ENCODE measurements at regions of chr19 and their contacts with region 1.

Region 1: GRCh38 chr19:19643158-19644053 is at the start of gene GMIP:
- DNase-seq: peak; percentile 89
- ATAC-seq: peak; percentile 89
- H3K4me3 Mint-ChIP-seq: peak within 1 kb of the TSS; percentile 99
- H3K27ac Mint-ChIP-seq: peak within 1 kb of the TSS; percentile 96
- H3K4me1 Mint-ChIP-seq: peaks cover 19% of the 10 kb centered on the region
- H3K27me3 Mint-ChIP-seq: no peaks in the 10 kb centered on the region
- CTCF ChIP-seq: no peak
- total RNA-seq, gene GMIP: 129 and 130 TPM in 2 replicates

Region 2: GRCh38 chr19:19515764-19516519 is 127.5 kb before region 1 on chr19 and contains the start of gene NDUFA13:
- CTCF ChIA-PET with region 1: no interaction called
- POLR2A ChIA-PET with region 1: no interaction called
- intact Hi-C with region 1: loop called (anchors 1 kb)
- DNase-seq: peak; percentile 97
- ATAC-seq: peak; percentile 90
- H3K4me3 Mint-ChIP-seq: peak within 1 kb of the TSS; percentile 95
- H3K27ac Mint-ChIP-seq: peak within 1 kb of the TSS; percentile 93
- H3K4me1 Mint-ChIP-seq: peaks cover 38% of the 10 kb centered on the region
- H3K27me3 Mint-ChIP-seq: no peaks in the 10 kb centered on the region
- CTCF ChIP-seq: no peak
- total RNA-seq, gene NDUFA13: 294 and 317 TPM in 2 replicates

Region 3: GRCh38 chr19:19591133-19591825 is 52.1 kb before region 1 on chr19:
- CTCF ChIA-PET with region 1: interaction called, 5 read pairs
- POLR2A ChIA-PET with region 1: no interaction called
- intact Hi-C with region 1: loop called (anchors 2 kb)
- DNase-seq: no peak
- ATAC-seq: peak; percentile 91
- H3K4me3 Mint-ChIP-seq: peak overlapping the region; percentile 70
- H3K27ac Mint-ChIP-seq: peak overlapping the region; percentile 92
- H3K4me1 Mint-ChIP-seq: peaks cover 41% of the 10 kb centered on the region
- H3K27me3 Mint-ChIP-seq: no peaks in the 10 kb centered on the region
- CTCF ChIP-seq: no peak

Region 4: DNA sequence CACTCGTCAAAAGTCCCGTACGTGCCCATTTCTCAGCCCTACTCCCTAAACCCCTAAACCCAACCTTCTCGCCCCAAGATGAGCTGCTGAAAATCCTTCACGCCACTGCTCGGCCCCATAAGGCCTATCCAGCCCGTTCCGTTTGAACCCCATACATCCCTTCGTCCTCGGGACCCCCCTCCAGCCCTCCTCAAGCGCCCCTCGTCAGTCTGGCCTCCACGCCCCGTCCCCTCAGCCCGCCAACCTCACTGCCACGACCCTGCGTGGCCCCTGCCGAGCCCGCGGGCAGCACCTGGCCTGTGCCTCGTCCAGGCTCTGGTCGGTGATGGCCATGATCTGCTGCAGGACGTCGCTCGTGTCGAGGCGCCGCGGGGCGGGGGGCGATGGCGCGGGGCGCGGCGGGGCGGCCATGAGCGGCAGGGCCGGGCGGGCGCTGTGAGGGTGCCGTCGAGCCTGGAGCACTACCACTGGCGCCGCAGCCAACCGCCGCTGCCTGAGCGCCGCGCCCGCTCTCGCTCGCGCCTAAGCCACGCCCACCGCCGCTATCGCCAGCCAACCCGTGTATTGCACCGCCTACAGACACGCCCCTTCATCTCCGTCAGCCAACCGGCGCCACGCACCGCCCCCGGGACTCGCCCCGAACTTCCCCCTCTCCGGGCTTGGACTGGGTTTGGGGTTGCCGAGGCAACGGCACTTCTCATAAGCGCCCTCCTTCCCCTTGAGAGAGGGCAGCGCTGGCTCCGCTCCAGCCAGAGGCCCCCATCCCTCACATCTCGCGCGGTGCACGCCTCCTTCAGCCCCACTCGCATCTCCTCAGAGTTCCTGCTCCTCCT is 25.0 kb before region 1 on chr19 and contains the start of gene PBX4:
- CTCF ChIA-PET with region 1: no interaction called
- POLR2A ChIA-PET with region 1: interaction called, 8 read pairs
- intact Hi-C with region 1: loop called (anchors 1 kb)
- DNase-seq: peak; percentile 98
- ATAC-seq: peak; percentile 95
- H3K4me3 Mint-ChIP-seq: peak within 1 kb of the TSS; percentile 85
- H3K27ac Mint-ChIP-seq: peak within 1 kb of the TSS; percentile 83
- H3K4me1 Mint-ChIP-seq: peaks cover 35% of the 10 kb centered on the region
- H3K27me3 Mint-ChIP-seq: no peaks in the 10 kb centered on the region
- CTCF ChIP-seq: no peak
- total RNA-seq, gene PBX4: 19.4 and 21.8 TPM in 2 replicates

Region 5: DNA sequence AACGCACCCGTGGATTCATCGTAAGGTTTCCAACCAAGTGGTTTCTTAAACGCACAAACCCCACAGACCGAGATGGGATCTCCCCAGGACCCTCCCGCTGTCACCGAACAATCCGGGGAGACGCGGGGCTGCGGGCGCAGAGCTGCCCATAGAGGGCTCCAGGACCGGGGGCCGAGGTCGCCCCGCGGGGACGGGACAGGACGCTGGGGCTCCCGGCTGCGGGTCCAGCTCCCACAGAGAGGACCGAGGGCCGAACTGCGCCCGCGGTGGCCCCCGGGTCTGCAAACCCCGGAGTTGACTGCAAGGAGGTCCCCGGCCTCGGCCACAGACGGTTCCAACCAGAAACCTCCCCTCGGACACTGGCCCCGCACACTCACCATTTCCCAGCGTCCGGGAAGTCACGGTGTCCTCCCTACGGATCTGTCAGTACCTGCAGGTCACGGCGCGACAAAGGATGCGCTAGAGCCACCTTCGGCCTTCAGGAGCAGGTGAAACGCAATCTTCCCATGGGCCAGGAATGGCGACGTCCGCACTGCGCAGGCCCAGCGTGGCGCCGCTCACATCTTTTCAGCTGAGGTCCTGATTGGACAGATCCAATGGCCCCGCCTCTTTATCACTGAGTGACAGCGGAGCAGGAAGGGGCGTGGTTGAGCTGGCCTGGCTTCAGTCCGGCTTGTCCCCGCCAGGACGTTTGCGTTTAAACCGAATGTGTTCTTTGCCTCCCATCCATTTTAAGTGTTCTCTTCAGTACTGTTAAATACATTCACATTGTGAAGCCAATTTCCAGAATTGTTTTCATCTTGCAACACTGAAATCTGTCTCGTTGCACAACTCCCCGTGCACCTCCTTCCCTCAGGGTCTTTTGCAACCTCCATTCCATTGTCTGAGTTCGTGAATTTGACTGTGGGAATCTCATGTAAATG is 89.4 kb after region 1 on chr19 and contains the start of gene ZNF14:
- CTCF ChIA-PET with region 1: no interaction called
- POLR2A ChIA-PET with region 1: interaction called, 8 read pairs
- intact Hi-C with region 1: loop called (anchors 1 kb)
- DNase-seq: peak; percentile 79
- ATAC-seq: peak; percentile 99
- H3K4me3 Mint-ChIP-seq: peak within 1 kb of the TSS; percentile 99
- H3K27ac Mint-ChIP-seq: peak within 1 kb of the TSS; percentile 96
- H3K4me1 Mint-ChIP-seq: peaks cover 28% of the 10 kb centered on the region
- H3K27me3 Mint-ChIP-seq: no peaks in the 10 kb centered on the region
- CTCF ChIP-seq: no peak
- total RNA-seq, gene ZNF14: 11.8 and 13.4 TPM in 2 replicates

Region 6: DNA sequence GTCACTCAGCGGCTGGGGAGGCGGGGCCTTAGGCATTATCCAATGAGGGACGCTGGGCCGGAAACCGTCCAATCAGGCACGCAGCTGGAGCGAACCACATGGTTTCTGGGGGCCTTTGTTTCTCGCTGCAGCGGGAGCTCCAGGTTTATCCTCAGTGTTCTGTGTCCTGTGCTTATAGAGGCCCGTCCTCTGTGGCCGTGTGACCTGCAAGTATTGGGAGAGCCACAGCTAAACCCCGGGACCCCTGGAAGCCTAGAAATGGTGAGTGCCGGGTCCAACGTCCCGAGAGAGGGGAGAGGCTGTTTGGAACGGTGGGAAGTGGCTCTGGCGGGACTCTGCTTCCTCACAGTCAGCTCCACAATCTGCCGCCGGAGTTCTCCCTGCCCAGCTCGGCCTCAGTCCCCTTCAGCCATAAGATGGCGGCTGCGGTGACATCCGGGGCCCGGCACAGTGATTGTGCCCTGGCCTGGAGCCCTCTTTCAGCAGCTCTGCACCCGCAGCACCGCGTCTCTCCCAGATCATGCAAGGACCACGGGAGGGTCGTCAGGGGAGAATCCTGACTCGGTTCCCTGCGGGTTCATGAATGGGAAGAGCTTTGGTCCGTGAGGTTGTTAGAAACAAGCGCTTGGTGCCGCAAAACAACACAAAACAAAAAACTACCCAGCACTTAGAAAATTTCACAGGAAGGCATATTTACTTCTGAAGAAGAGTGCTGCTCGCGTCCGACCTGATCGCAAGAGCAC is 222.5 kb after region 1 on chr19 and contains the start of gene ZNF253:
- CTCF ChIA-PET with region 1: no interaction called
- POLR2A ChIA-PET with region 1: interaction called, 4 read pairs
- intact Hi-C with region 1: loop called (anchors 1 kb)
- DNase-seq: peak; percentile 82
- ATAC-seq: peak; percentile 90
- H3K4me3 Mint-ChIP-seq: peak within 1 kb of the TSS; percentile 100
- H3K27ac Mint-ChIP-seq: peak within 1 kb of the TSS; percentile 99
- H3K4me1 Mint-ChIP-seq: peaks cover 34% of the 10 kb centered on the region
- H3K27me3 Mint-ChIP-seq: no peaks in the 10 kb centered on the region
- CTCF ChIP-seq: no peak
- total RNA-seq, gene ZNF253: 24.7 and 26.3 TPM in 2 replicates

Region 7: DNA sequence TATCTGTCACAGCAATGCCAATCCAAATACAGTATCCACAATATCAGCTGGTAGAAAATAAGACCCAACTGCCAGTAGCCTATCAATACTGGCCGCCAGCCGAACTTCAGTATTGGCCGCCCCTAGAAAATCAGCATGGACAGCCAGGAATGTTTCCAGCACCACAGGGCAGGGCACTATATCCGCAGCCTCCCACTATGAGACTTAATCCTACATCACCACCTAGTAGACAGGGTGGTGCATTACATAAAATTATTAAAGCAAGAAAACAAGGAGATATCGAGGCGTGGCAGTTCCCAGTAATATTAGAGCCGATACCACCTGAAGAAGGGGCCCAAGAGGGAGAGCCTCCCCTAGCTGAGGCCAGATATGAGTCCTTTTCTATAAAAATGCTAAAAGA is 634.9 kb after region 1 on chr19:
- CTCF ChIA-PET with region 1: no interaction called
- POLR2A ChIA-PET with region 1: no interaction called
- intact Hi-C with region 1: loop called (anchors 1 kb)
- DNase-seq: no peak
- ATAC-seq: no peak
- H3K4me3 Mint-ChIP-seq: no peak overlapping the region
- H3K27ac Mint-ChIP-seq: no peak overlapping the region
- H3K4me1 Mint-ChIP-seq: peaks cover 29% of the 10 kb centered on the region
- H3K27me3 Mint-ChIP-seq: no peaks in the 10 kb centered on the region
- CTCF ChIP-seq: no peak

Measured in activated B cell treated with CpG ODN at 0.5 μM for 24 hours (primary cell).